Breast epithelium (tissue), 4 donors: ENCODE measurements at regions of chr11 and their contacts with region 1.

Region 1: DNA sequence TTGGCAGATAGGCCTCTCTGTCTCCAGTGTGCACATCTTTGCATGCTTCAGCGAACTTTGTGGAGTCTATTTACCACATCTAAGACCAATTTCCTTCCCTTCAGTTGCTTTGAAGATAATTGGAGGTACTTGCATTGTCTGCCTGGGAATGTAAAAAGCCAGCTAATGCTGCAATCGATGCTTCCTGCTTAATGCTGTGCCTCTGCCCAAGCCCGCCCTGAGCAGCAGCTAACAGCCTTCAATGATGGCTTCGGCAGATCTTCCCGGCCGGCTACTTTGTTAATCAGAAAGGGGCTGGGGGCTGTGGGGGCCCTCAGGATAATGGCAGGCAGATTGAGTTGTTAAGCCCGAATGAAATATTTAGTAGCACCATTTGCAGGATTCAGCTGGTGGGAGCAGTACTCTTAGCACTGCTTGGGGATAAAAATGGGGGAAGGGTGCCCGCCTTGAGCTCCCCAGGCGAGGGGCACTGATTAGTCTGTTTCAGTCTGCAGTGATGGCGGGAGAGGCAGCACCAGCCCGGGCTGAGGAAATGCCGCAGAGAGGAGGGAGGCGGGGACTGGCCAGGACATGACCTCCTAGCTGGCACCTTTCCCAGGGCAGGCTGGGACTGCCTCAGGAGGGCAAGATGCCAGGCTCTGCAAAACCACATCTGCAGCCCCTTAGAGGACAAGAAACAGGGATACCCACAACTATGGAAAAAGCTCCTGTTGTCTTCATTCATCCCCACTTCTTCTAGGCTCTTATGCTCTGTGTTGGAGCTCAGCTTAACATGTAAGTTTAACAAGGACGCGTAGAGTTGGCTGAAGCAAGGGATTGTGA is 460.0 kb downstream of the BUD13 start:
- DNase-seq: peak; percentile 62 to 81
- H3K4me3 ChIP-seq: peak overlapping the region in 2 of 3 donors; percentile 1 to 38
- H3K27ac ChIP-seq: peak overlapping the region in 1 of 2 donors; percentile 3
- H3K4me1 ChIP-seq: no peaks in the 10 kb centered on the region
- H3K27me3 ChIP-seq: no peaks in the 10 kb centered on the region
- CTCF ChIP-seq: no peak
- POLR2A ChIP-seq: no peak

Region 2: DNA sequence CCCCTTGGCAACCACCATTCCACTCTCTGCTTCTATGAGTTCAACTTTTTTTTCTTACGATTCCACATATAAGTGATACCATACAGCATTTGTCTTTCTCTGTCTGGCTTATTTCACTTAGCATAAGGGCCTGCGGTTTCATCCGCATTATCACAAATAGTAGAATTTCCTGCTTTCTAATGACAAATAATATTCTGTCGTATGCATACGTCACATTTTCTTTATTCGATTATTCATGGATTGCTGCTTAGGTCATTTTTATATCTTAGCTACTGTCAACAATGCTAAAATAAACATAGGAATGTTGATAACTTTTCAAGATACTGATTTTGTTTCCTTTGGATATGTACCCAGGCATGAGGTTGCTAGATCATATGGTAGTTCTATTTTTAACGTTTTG is 300.7 kb before region 1 on chr11:
- intact Hi-C with region 1: no loop called
- DNase-seq: no peak
- H3K4me3 ChIP-seq: no peak overlapping the region
- H3K27ac ChIP-seq: no peak overlapping the region
- H3K4me1 ChIP-seq: no peaks in the 10 kb centered on the region
- H3K27me3 ChIP-seq: no peaks in the 10 kb centered on the region
- CTCF ChIP-seq: no peak
- POLR2A ChIP-seq: no peak

Region 3: GRCh38 chr11:116294631-116295030 is 18.1 kb before region 1 on chr11:
- intact Hi-C with region 1: loop called (anchors 1 kb)
- DNase-seq: no peak
- H3K4me3 ChIP-seq: no peak overlapping the region
- H3K27ac ChIP-seq: no peak overlapping the region
- H3K4me1 ChIP-seq: no peaks in the 10 kb centered on the region
- H3K27me3 ChIP-seq: no peaks in the 10 kb centered on the region
- CTCF ChIP-seq: no peak
- POLR2A ChIP-seq: no peak

Region 4: GRCh38 chr11:116339306-116340098 is 26.7 kb after region 1 on chr11:
- intact Hi-C with region 1: no loop called
- DNase-seq: no peak
- H3K4me3 ChIP-seq: no peak overlapping the region
- H3K27ac ChIP-seq: no peak overlapping the region
- H3K4me1 ChIP-seq: no peaks in the 10 kb centered on the region
- H3K27me3 ChIP-seq: no peaks in the 10 kb centered on the region
- CTCF ChIP-seq: no peak
- POLR2A ChIP-seq: no peak